ENCODE measurements at regions of chr2 and their contacts with region 1.

Region 1: GRCh38 chr2:231780909-231781797 is at the start of gene PDE6D:
- DNase-seq: peak; percentile 90 to 99 (median 95)
- ATAC-seq: peak; percentile 89
- H3K4me3 ChIP-seq: peak within 1 kb of the TSS; percentile 78 to 97
- H3K4me3 Mint-ChIP-seq: peak within 1 kb of the TSS; percentile 99
- H3K27ac ChIP-seq: peak within 1 kb of the TSS; percentile 53 to 89
- H3K27ac Mint-ChIP-seq: peak within 1 kb of the TSS; percentile 96
- H3K4me1 ChIP-seq: peaks cover 44% of the 10 kb centered on the region
- H3K4me1 Mint-ChIP-seq: peaks cover 71% of the 10 kb centered on the region
- H3K27me3 ChIP-seq: no peaks in the 10 kb centered on the region
- H3K27me3 Mint-ChIP-seq: no peaks in the 10 kb centered on the region
- CTCF ChIP-seq: no peak
- total RNA-seq, gene PDE6D: 4.7 to 5.6 TPM

Region 2: DNA sequence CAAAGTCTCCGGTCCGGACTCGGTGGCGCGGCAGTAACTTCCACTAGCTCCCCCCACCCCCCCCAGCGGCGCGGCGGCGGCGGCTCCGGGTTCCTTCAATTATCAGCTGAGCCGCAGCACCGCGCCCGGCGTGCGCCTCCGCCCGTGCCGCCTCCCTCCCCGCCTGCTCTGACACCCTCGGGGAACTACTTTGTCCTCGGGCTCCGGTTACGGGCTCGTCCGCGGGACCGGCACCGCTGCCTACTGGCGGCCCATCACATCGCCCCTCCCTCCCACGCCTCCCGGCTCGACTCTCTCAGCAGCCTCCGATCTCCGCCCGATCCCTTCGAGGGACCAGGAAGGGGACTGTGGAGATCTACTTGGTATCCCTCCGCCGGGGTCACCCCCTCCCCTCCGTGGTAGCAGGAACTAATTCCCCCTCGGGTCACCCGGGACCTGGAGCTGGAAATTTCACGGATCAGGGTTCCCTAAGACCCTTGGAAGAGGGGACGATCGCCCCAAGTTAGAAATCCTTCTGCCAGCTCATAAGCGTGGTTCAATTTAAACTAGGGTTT is 1859.2 kb before region 1 on chr2 and contains the start of gene TRIP12:
- CTCF ChIA-PET with region 1: no interaction called
- POLR2A ChIA-PET with region 1: no interaction called
- intact Hi-C with region 1: loop called (anchors 5 to 10 kb)
- DNase-seq: peak; percentile 72 to 95 (median 87)
- ATAC-seq: peak; percentile 73
- H3K4me3 ChIP-seq: peak within 1 kb of the TSS; percentile 88 to 99
- H3K4me3 Mint-ChIP-seq: peak within 1 kb of the TSS; percentile 99
- H3K27ac ChIP-seq: peak within 1 kb of the TSS; percentile 88 to 96
- H3K27ac Mint-ChIP-seq: peak within 1 kb of the TSS; percentile 99
- H3K4me1 ChIP-seq: peaks cover 35% of the 10 kb centered on the region
- H3K4me1 Mint-ChIP-seq: peaks cover 49% of the 10 kb centered on the region
- H3K27me3 ChIP-seq: no peaks in the 10 kb centered on the region
- H3K27me3 Mint-ChIP-seq: no peaks in the 10 kb centered on the region
- CTCF ChIP-seq: no peak
- total RNA-seq, gene TRIP12: 156 to 167 TPM

Region 3: DNA sequence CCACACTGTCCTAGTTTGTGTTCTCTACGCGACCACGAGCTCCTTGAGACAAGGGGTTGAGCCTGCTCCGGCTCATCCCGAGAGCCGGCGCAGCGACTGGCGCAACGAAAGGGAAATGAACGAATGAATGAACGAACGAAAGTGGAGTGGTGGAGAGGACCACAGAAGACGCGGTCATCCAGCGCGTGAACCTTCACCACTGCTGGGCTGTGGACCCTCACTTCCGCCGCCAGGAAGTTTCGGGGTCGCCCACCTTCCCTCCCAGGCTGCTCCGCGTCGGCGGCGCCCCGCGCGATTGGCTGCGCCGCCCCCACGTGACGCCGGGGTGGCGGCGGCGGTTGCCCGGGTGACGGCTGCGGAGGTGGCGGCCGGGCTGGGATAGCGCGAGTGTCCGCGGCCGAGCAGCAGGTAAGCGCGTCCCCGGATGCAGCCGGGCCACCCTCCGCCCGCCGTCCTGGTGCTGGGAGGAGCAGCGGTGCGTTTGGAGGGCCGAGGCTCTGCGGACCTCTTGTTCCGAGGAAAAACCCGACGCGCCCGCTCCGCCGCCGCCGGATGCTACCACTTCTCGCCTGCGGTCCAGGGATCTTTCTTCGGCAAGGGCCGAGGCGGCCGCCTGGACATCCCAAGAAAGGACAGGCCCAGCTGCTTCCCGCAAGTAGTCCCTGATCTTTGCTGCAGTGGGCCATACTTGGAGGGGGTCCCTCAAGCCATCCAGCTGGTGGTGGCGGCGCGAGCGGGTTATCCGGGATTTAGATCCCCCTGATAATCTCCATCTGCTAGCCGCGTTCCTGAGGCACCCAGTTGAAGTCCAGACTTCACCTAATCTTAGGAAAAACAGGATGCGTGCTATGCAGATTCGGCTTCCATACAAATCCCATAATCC is 582.6 kb before region 1 on chr2 and contains the start of gene ARMC9:
- CTCF ChIA-PET with region 1: no interaction called
- POLR2A ChIA-PET with region 1: no interaction called
- intact Hi-C with region 1: loop called in 1 of 2 experiments (anchors 5 kb)
- DNase-seq: peak; percentile 30 to 84 (median 70)
- ATAC-seq: peak; percentile 94
- H3K4me3 ChIP-seq: peak within 1 kb of the TSS; percentile 98
- H3K4me3 Mint-ChIP-seq: peak within 1 kb of the TSS; percentile 92
- H3K27ac ChIP-seq: peak within 1 kb of the TSS; percentile 50 to 56
- H3K27ac Mint-ChIP-seq: peak within 1 kb of the TSS; percentile 60
- H3K4me1 ChIP-seq: peaks cover 9% of the 10 kb centered on the region
- H3K4me1 Mint-ChIP-seq: peaks cover 14% of the 10 kb centered on the region
- H3K27me3 ChIP-seq: no peaks in the 10 kb centered on the region
- H3K27me3 Mint-ChIP-seq: peaks cover 3% of the 10 kb centered on the region
- CTCF ChIP-seq: no peak
- total RNA-seq, gene ARMC9: 1.2 to 1.4 TPM

Region 4: GRCh38 chr2:231604685-231605606 is 176.2 kb before region 1 on chr2:
- CTCF ChIA-PET with region 1: no interaction called
- POLR2A ChIA-PET with region 1: no interaction called
- intact Hi-C with region 1: loop called (anchors 5 to 10 kb)
- DNase-seq: peak; percentile 90 to 98 (median 95)
- ATAC-seq: peak; percentile 76
- H3K4me3 ChIP-seq: peak overlapping the region; percentile 37 to 42
- H3K4me3 Mint-ChIP-seq: peak overlapping the region; percentile 69
- H3K27ac ChIP-seq: peak overlapping the region; percentile 46 to 66
- H3K27ac Mint-ChIP-seq: peak overlapping the region; percentile 32
- H3K4me1 ChIP-seq: peaks cover 12% of the 10 kb centered on the region
- H3K4me1 Mint-ChIP-seq: peaks cover 7% of the 10 kb centered on the region
- H3K27me3 ChIP-seq: no peaks in the 10 kb centered on the region
- H3K27me3 Mint-ChIP-seq: peaks cover 2% of the 10 kb centered on the region
- CTCF ChIP-seq: no peak

Region 5: DNA sequence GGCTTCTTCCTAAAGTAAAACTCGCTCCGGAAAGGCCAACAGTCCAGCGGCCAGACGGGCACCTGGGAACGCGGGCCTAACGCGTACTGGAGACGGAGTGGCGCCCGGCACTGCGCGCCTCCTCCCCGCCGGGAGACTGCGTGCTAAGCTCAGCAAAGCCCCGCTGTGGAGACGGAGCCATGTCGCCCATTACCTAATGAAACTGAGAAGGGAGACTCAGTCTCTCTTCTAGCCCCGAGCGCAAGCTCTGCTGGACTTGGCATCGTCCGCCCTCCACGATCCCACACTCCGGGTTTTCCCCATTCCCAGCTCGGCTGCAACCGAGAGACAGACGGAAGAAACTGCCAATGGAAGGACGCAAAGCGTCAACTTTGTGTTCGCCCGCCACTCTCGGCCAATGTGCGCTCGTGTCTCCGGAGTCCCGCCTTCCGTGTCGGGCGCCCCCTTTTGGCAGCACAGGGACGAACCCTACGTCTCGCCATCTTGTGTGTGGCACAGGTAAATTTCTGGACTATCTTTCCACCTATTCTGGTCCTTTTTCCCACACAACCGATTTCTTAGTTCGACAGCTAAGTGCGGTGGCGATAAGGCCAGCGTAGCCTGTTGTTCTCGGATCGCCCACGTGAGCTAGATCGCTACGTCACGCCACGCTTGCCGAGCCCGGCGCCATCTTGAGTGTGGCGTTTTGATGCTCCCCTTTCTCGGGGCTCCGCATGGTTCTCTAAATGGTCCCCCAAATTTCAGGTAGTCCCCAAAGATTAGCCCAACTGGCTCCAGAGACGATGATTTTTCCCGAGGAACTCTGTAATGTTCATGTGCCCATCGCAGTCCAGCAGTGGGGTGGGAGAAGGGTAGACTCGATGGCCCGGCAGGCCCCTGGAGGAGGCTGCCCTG is 74.2 kb before region 1 on chr2:
- CTCF ChIA-PET with region 1: no interaction called
- POLR2A ChIA-PET with region 1: interaction called, 3 read pairs
- intact Hi-C with region 1: loop called (anchors 1 to 2 kb)
- DNase-seq: peak; percentile 93 to 99 (median 97)
- ATAC-seq: peak; percentile 50
- H3K4me3 ChIP-seq: peak overlapping the region; percentile 85 to 92
- H3K4me3 Mint-ChIP-seq: peak overlapping the region; percentile 98
- H3K27ac ChIP-seq: peak overlapping the region; percentile 95 to 97
- H3K27ac Mint-ChIP-seq: peak overlapping the region; percentile 100
- H3K4me1 ChIP-seq: peaks cover 25% of the 10 kb centered on the region
- H3K4me1 Mint-ChIP-seq: peaks cover 31% of the 10 kb centered on the region
- H3K27me3 ChIP-seq: no peaks in the 10 kb centered on the region
- H3K27me3 Mint-ChIP-seq: no peaks in the 10 kb centered on the region
- CTCF ChIP-seq: peak; percentile 83

Region 6: GRCh38 chr2:231745303-231746038 is 35.7 kb before region 1 on chr2:
- CTCF ChIA-PET with region 1: no interaction called
- POLR2A ChIA-PET with region 1: no interaction called
- intact Hi-C with region 1: no loop called
- DNase-seq: no peak
- ATAC-seq: no peak
- H3K4me3 ChIP-seq: no peak overlapping the region
- H3K4me3 Mint-ChIP-seq: no peak overlapping the region
- H3K27ac ChIP-seq: no peak overlapping the region
- H3K27ac Mint-ChIP-seq: no peak overlapping the region
- H3K4me1 ChIP-seq: no peaks in the 10 kb centered on the region
- H3K4me1 Mint-ChIP-seq: peaks cover 4% of the 10 kb centered on the region
- H3K27me3 ChIP-seq: no peaks in the 10 kb centered on the region
- H3K27me3 Mint-ChIP-seq: no peaks in the 10 kb centered on the region
- CTCF ChIP-seq: no peak

Region 7: DNA sequence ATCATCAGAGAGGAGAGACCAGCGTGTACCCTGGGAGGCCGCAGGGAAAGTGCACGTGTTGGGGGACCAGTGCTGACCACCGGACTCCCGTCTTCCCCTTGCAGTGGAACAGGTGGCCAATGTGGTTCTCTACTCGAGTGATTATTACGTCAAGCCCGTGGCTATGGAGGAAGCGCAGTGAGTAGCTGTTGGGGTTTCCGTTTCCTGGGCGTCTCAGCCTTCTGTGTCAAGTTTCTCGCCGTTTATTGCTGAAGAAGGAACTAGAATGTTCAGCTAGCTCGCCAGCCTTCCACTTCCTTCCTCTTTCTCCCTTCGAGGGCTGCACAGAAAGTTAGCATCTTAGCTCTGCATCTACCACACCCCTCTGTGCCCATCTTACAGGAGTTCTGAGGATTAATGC is 1550.4 kb after region 1 on chr2:
- CTCF ChIA-PET with region 1: no interaction called
- POLR2A ChIA-PET with region 1: no interaction called
- intact Hi-C with region 1: loop called in 1 of 2 experiments (anchors 5 kb)
- DNase-seq: peak; percentile 61 to 96 (median 83)
- ATAC-seq: peak; percentile 92
- H3K4me3 ChIP-seq: peak overlapping the region; percentile 2 to 5
- H3K4me3 Mint-ChIP-seq: peak overlapping the region; percentile 29
- H3K27ac ChIP-seq: peak overlapping the region; percentile 66 to 89
- H3K27ac Mint-ChIP-seq: peak overlapping the region; percentile 96
- H3K4me1 ChIP-seq: peaks cover 53% of the 10 kb centered on the region
- H3K4me1 Mint-ChIP-seq: peaks cover 48% of the 10 kb centered on the region
- H3K27me3 ChIP-seq: no peaks in the 10 kb centered on the region
- H3K27me3 Mint-ChIP-seq: no peaks in the 10 kb centered on the region
- CTCF ChIP-seq: no peak

Measured in CD8-positive, alpha-beta T cell (primary cell).